Activated CD4-positive, alpha-beta memory T cell treated with anti-CD3 and anti-CD28 coated beads for 36 hours (primary cell): ENCODE measurements at regions of chr18 and their contacts with region 1.

Region 1: GRCh38 chr18:70621710-70622109 is 332.9 kb downstream of the SOCS6 start:
- DNase-seq: no peak
- H3K4me3 Mint-ChIP-seq: peak overlapping the region; percentile 49
- H3K27ac Mint-ChIP-seq: peak overlapping the region; percentile 84
- H3K4me1 Mint-ChIP-seq: peaks cover 33% of the 10 kb centered on the region
- H3K27me3 Mint-ChIP-seq: no peaks in the 10 kb centered on the region

Region 2: GRCh38 chr18:70645971-70646370 is 24.3 kb after region 1 on chr18:
- CTCF ChIA-PET with region 1: no interaction called
- POLR2A ChIA-PET with region 1: no interaction called
- intact Hi-C with region 1: no loop called
- DNase-seq: no peak
- H3K4me3 Mint-ChIP-seq: no peak overlapping the region
- H3K27ac Mint-ChIP-seq: no peak overlapping the region
- H3K4me1 Mint-ChIP-seq: peaks cover 4% of the 10 kb centered on the region
- H3K27me3 Mint-ChIP-seq: no peaks in the 10 kb centered on the region

Region 3: GRCh38 chr18:70659036-70659925 is 37.6 kb after region 1 on chr18:
- CTCF ChIA-PET with region 1: no interaction called
- POLR2A ChIA-PET with region 1: no interaction called
- intact Hi-C with region 1: loop called (anchors 5 kb)
- DNase-seq: peak; percentile 47
- H3K4me3 Mint-ChIP-seq: peak overlapping the region; percentile 35
- H3K27ac Mint-ChIP-seq: peak overlapping the region; percentile 20
- H3K4me1 Mint-ChIP-seq: peaks cover 34% of the 10 kb centered on the region
- H3K27me3 Mint-ChIP-seq: no peaks in the 10 kb centered on the region